Right ventricle myocardium inferior (tissue), 1 donor: ENCODE measurements at regions of chr3 and their contacts with region 1.

Region 1: GRCh38 chr3:128725932-128726690 is at the start of gene RAB7A:
- DNase-seq: peak; percentile 98
- ATAC-seq: peak; percentile 99
- total RNA-seq, gene RAB7A: 242 TPM

Region 2: DNA sequence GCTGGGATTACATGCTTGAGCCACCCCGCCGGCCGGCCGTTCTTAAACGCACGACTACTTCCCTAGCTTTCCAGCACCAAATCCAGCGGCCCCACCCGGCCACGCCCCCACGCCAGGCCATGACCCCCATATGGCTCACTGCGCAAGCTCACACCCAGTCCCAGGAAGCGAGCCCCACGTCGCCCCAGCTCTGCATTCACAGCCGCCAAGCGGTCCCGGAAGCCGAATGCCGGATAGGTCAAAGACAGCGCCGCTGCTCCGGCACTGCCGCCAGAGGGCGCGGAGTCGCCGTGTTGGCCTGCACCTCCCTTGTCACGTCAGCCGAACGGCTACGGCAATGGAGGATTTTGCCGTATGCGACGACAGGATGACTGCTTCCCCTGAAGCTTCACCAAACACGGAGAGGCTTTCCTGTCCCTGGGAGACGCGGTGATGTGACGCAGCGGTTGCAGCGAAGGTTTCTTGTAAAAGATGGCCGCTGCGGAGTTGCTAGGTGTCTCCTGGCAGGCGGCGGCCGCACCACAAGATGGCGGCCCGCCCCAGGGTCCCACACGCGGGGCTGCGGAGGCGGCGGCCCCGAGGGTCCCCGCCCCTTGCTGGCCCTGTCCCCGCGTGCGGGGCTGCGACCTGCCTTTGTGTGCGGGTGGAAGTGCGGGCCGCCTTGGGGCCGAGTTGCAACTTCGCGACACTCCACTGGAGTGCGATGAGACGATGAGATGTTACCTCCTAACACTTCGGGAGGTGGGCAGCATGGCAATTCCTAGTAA is 45.3 kb before region 1 on chr3:
- intact Hi-C with region 1: loop called (anchors 2 kb)
- DNase-seq: peak; percentile 100
- ATAC-seq: peak; percentile 100

Region 3: DNA sequence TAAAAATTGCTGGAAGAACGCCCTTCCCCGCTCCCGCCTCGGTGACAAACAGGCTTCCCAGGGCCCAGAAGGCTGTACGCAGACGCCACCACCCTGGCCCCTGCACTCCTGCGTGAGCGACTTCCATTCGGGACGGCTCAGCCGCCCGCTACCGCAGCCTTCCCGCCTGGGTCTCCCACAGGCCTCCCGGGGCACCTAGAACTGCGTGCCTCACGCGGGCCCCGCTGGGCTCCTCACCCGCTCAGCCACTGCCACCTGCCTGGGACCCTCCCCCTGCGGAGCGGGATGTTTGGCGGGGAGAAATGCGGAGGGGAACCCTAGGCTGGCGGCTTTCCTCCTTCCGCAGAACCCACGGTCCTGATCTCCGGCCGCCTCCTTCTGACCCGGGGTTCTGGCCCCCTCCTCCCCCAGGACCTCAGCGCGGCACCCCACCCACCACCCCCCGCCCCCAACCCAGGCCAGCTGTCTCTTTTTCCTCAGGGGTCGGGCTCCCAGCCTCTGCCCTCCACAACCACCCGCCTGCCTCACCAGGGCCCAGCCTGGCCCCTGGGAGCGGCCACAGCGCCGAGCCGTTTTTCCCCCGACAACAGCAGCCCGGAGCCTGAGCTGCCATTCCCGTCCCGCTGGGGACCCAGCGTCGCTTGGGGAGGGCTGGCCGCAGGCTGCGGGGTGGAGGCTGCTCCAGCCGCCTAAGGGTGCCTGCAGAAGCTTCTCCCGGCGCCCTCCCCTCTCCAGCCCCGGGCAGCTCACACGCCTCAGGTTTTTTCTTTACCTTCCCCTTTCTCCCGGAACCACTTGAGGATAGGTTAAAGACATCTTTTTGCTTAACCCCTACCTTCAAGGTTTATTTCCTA is 27.7 kb before region 1 on chr3:
- intact Hi-C with region 1: loop called (anchors 2 kb)
- DNase-seq: peak; percentile 78
- ATAC-seq: peak; percentile 81

Region 4: DNA sequence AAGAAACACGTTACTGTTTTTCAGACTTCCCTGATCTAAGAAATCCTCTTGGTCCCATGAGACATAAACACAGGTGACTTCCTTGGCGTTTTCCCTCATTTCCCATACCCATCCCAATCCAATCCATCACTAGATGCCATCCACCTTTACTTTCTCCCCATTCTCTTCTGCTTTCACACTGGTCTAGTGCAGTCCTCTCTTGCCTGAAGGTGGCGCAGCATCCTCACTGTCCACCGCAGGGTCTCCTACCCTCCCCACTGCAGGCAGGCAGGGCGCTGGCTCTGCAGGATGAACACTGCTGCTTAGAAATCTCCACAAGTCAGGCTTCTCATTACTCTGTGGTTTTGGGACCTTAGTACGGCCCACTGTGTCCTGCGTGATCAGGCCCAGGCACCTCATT is 58.1 kb after region 1 on chr3:
- intact Hi-C with region 1: loop called (anchors 5 kb)
- DNase-seq: peak; percentile 76
- ATAC-seq: peak; percentile 81